Activated CD8-positive, alpha-beta memory T cell treated with anti-CD3 and anti-CD28 coated beads, Interleukin-2, amount 10 ng/mL, durations not matched to agents 7 days and 5 days (primary cell): ENCODE measurements at regions of chr17 and their contacts with region 1.

Region 1: GRCh38 chr17:4412933-4413831 is 20.6 kb upstream of the SPNS3 start:
- DNase-seq: peak; percentile 94
- ATAC-seq: peak; percentile 100
- H3K4me3 Mint-ChIP-seq: peak overlapping the region; percentile 59
- H3K27ac Mint-ChIP-seq: peak overlapping the region; percentile 74
- H3K4me1 Mint-ChIP-seq: peaks cover 6% of the 10 kb centered on the region
- H3K27me3 Mint-ChIP-seq: no peaks in the 10 kb centered on the region

Region 2: GRCh38 chr17:4215882-4216570 is 197.2 kb before region 1 on chr17:
- CTCF ChIA-PET with region 1: interaction called, 57 read pairs
- DNase-seq: no peak
- ATAC-seq: no peak
- H3K4me3 Mint-ChIP-seq: no peak overlapping the region
- H3K27ac Mint-ChIP-seq: peak overlapping the region; percentile 81
- H3K4me1 Mint-ChIP-seq: peaks cover 17% of the 10 kb centered on the region
- H3K27me3 Mint-ChIP-seq: no peaks in the 10 kb centered on the region

Region 3: GRCh38 chr17:4256952-4257351 is 156.2 kb before region 1 on chr17:
- CTCF ChIA-PET with region 1: no interaction called
- DNase-seq: no peak
- ATAC-seq: no peak
- H3K4me3 Mint-ChIP-seq: no peak overlapping the region
- H3K27ac Mint-ChIP-seq: peak overlapping the region; percentile 15
- H3K4me1 Mint-ChIP-seq: peaks cover 44% of the 10 kb centered on the region
- H3K27me3 Mint-ChIP-seq: no peaks in the 10 kb centered on the region